PC-9 (cell line): ENCODE measurements at regions of chr16 and their contacts with region 1.

Region 1: DNA sequence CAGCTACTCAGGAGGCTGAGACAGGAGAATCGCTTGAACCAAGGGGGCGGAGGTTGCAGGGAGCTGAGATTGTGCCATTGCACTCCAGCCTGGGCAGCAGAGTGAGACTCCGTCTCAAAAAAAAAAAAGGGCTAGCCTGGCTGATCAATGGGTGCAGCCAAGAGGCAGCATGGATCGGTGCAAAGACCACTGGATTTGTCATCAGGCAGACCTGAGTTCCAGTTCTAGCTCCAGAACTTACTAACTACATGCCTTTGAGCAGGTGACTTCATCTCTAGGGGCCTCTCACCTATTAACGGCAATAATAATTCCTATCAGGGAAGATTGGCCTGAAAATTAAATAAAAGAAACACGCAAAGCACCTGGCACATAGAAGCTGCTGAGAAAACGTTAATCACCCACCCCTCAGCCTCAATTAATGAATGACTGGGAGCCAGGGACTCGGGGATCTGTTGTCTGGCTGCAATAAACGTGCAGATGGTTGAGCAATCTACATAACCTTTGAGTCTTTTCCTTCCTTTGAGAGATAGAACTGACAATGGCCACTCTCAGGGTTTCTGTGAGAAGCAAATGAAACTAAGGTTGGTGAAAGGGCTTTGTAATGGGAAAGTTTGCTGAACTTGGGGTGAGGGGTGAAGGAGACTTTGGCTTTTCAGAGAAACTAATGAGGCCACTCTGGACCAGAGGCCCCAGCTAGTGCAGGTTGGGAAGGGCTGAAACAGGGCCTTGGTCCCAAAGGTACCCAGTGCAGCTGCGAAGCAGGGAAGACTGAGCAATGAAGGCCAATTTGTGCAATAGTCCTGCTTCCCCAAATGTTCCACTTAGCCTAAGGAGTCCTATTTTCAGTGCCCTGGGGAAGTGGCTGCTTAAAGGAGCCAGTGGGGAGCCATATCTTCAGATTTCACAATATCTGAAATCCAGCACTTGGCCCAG is 7.6 kb downstream of the SEZ6L2 start:
- DNase-seq: no peak
- H3K4me3 ChIP-seq: no peak overlapping the region
- H3K27ac ChIP-seq: no peak overlapping the region
- H3K4me1 ChIP-seq: no peaks in the 10 kb centered on the region
- H3K27me3 ChIP-seq: no peaks in the 10 kb centered on the region
- CTCF ChIP-seq: no peak

Region 2: DNA sequence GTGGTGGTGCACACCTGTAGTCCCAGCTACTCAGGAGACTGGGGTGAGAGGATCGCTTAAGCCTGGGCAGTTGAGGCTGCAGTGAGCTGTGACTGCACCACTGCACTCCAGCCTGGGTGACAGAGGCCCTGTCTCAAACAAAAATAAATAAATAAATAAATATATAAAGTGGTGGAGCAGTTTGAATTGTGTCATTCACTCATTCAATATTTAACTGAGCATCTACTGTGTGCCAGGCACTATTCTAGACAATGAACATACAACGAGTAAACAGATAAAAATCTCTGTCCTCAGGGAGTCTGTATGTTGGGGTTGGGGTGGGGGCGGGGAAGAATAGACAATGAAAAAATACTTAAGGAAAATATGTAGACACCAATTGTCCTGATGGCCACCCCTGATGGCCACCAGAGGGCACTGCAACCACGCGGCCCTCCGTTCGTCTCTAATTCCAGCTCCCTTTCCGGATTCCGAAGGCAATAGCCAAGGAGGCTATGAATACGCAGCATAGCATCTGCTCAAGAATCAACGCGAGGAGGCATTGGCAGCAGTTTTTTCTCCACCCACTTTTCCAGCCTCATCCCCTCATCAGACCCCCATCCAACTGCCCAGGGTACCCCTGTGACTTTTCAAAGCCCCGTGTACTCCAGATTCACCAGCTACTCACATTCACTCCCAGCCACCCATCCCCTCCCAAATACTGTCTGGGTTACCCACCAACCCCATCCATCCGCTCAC is 191.4 kb before region 1 on chr16:
- CTCF ChIA-PET with region 1: no interaction called
- POLR2A ChIA-PET with region 1: no interaction called
- intact Hi-C with region 1: no loop called
- DNase-seq: peak; percentile 83 to 90
- H3K4me3 ChIP-seq: no peak overlapping the region
- H3K27ac ChIP-seq: no peak overlapping the region
- H3K4me1 ChIP-seq: peaks cover 7% of the 10 kb centered on the region; the same call in 1 of the 2 replicates
- H3K27me3 ChIP-seq: no peaks in the 10 kb centered on the region
- CTCF ChIP-seq: peak; percentile 96

Region 3: GRCh38 chr16:29943846-29944669 is 52.3 kb after region 1 on chr16:
- CTCF ChIA-PET with region 1: interaction called, 16 read pairs
- POLR2A ChIA-PET with region 1: no interaction called
- intact Hi-C with region 1: no loop called
- DNase-seq: peak; percentile 92 to 99
- H3K4me3 ChIP-seq: peak overlapping the region; percentile 47; the same call in 1 of the 2 replicates
- H3K27ac ChIP-seq: peak overlapping the region; percentile 94
- H3K4me1 ChIP-seq: peaks cover 26% of the 10 kb centered on the region
- H3K27me3 ChIP-seq: no peaks in the 10 kb centered on the region
- CTCF ChIP-seq: peak; percentile 69

Region 4: DNA sequence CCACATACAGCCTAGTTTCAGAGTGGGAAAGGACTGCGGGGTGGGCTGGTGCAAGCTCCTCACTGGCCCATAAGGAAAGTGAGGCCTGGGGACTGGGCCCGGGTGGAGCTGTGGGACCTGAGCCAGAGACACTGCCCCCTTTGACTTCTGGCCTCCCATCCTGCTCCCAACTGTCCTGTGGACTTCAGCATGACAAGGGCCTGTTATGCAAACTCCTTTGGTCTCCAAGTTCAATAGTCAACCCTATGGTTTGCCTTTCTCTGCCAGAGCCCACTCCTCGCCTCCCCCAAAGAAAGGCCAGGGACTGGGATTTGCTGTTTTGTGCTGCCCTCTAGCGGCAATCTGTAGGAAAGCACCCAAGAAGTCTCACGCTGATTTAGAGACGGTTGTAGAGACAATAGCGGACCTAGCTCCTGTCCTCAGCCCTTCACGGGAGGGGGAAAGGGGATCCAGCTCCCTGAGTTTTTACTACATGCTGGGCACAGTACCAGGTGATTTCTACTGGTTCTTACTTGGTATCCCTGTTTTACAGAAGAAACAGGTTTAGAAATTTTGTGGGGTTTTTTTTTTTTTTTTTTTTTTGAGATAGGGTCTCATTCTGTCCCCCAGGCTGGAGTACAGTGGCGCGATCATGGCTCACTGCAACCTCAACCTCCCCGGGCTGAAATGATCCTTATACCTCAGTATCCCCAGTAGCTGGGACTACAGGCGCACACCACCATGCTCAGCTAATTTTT is 140.5 kb after region 1 on chr16:
- CTCF ChIA-PET with region 1: no interaction called
- POLR2A ChIA-PET with region 1: interaction called, 13 read pairs
- intact Hi-C with region 1: no loop called
- DNase-seq: peak; percentile 66 to 72
- H3K4me3 ChIP-seq: no peak overlapping the region
- H3K27ac ChIP-seq: no peak overlapping the region
- H3K4me1 ChIP-seq: no peaks in the 10 kb centered on the region
- H3K27me3 ChIP-seq: peaks cover 42% of the 10 kb centered on the region
- CTCF ChIP-seq: peak; percentile 99